Heart left ventricle (tissue), 16 donors: ENCODE measurements at regions of chr19 and their contacts with region 1.

Region 1: DNA sequence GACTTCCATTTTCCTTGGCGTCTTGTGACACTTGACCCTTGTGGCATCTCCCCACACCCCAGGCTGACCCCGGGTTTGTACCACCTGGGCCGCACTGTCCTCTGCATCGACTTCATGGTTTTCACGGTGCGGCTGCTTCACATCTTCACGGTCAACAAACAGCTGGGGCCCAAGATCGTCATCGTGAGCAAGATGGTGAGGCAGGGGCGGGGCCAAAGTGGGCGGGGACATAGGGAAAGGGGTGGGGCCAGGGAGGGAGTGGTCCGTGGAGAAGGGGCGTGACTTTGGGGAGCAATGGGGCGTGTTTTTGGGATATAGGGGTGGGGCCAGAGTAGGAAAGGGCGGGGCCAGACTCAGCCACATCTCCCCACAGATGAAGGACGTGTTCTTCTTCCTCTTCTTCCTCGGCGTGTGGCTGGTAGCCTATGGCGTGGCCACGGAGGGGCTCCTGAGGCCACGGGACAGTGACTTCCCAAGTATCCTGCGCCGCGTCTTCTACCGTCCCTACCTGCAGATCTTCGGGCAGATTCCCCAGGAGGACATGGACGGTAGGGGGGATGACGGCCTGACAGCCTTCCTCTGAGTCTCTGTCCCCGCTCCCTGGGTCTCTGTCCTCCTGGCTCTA is 42.8 kb downstream of the TRPM4 start:
- DNase-seq: no peak
- ATAC-seq: peak in 2 of 4 donors; percentile 26 to 44
- H3K4me3 ChIP-seq: no peak overlapping the region
- H3K27ac ChIP-seq: no peak overlapping the region
- H3K4me1 ChIP-seq: peaks cover 0 to 17% (median 6%) of the 10 kb centered on the region in 12 donors
- H3K27me3 ChIP-seq: no peaks in the 10 kb centered on the region
- CTCF ChIP-seq: no peak
- POLR2A ChIP-seq: no peak

Region 2: GRCh38 chr19:48881741-48882657 is 318.4 kb before region 1 on chr19:
- intact Hi-C with region 1: no loop called
- DNase-seq: no peak
- ATAC-seq: peak in 3 of 4 donors; percentile 30 to 62 (median 46)
- H3K4me3 ChIP-seq: no peak overlapping the region
- H3K27ac ChIP-seq: peak overlapping the region in 1 of 12 donors; percentile 62
- H3K4me1 ChIP-seq: peaks cover 0 to 34% (median 23%) of the 10 kb centered on the region in 12 donors
- H3K27me3 ChIP-seq: no peaks in the 10 kb centered on the region
- CTCF ChIP-seq: no peak
- POLR2A ChIP-seq: no peak

Region 3: GRCh38 chr19:48993175-48994034 is 206.9 kb before region 1 on chr19 and contains the starts of genes GYS1 and RUVBL2:
- intact Hi-C with region 1: loop called in 3 of 10 experiments (anchors 10 kb)
- DNase-seq: peak; percentile 99 to 100 (median 100)
- ATAC-seq: peak; percentile 91 to 94 (median 94)
- H3K4me3 ChIP-seq: peak within 1 kb of the TSS; percentile 56 to 99 (median 82)
- H3K27ac ChIP-seq: peak within 1 kb of the TSS; percentile 86 to 99 (median 96)
- H3K4me1 ChIP-seq: peaks cover 6 to 51% (median 35%) of the 10 kb centered on the region in 12 donors
- H3K27me3 ChIP-seq: no peaks in the 10 kb centered on the region
- CTCF ChIP-seq: peak; percentile 92 to 100 (median 98)
- POLR2A ChIP-seq: peak; percentile 77 to 98
- total RNA-seq, gene GYS1: 125 to 264 (median 173) TPM
- total RNA-seq, gene RUVBL2: 41.4 to 93.9 (median 50.9) TPM

Region 4: GRCh38 chr19:49097455-49098288 is 102.7 kb before region 1 on chr19:
- intact Hi-C with region 1: loop called in 9 of 10 experiments (anchors 2 to 5 kb)
- DNase-seq: peak; percentile 54 to 73 (median 62)
- ATAC-seq: peak; percentile 37 to 66 (median 57)
- H3K4me3 ChIP-seq: no peak overlapping the region
- H3K27ac ChIP-seq: no peak overlapping the region
- H3K4me1 ChIP-seq: peaks cover 0 to 32% (median 19%) of the 10 kb centered on the region in 12 donors
- H3K27me3 ChIP-seq: no peaks in the 10 kb centered on the region
- CTCF ChIP-seq: peak; percentile 97 to 100 (median 99)
- POLR2A ChIP-seq: no peak

Region 5: GRCh38 chr19:49157445-49158224 is 42.7 kb before region 1 on chr19 and contains the start of gene TRPM4:
- intact Hi-C with region 1: loop called in 4 of 10 experiments (anchors 5 kb)
- DNase-seq: peak; percentile 95 to 97 (median 96)
- ATAC-seq: peak; percentile 64 to 80 (median 79)
- H3K4me3 ChIP-seq: peak within 1 kb of the TSS; percentile 78 to 99 (median 90)
- H3K27ac ChIP-seq: peak within 1 kb of the TSS; percentile 89 to 100 (median 96)
- H3K4me1 ChIP-seq: peaks cover 0 to 40% (median 16%) of the 10 kb centered on the region in 12 donors
- H3K27me3 ChIP-seq: no peaks in the 10 kb centered on the region
- CTCF ChIP-seq: no peak
- POLR2A ChIP-seq: peak; percentile 6 to 92
- total RNA-seq, gene TRPM4: 19.3 to 34.5 (median 25.8) TPM

Region 6: GRCh38 chr19:49165111-49165750 is 35.1 kb before region 1 on chr19:
- intact Hi-C with region 1: loop called in 4 of 10 experiments (anchors 5 kb)
- DNase-seq: peak; percentile 52 to 81 (median 65)
- ATAC-seq: peak; percentile 87 to 94 (median 92)
- H3K4me3 ChIP-seq: peak overlapping the region in 9 of 12 donors; percentile 5 to 34 (median 22)
- H3K27ac ChIP-seq: peak overlapping the region; percentile 72 to 99 (median 90)
- H3K4me1 ChIP-seq: peaks cover 5 to 34% (median 20%) of the 10 kb centered on the region in 12 donors
- H3K27me3 ChIP-seq: no peaks in the 10 kb centered on the region
- CTCF ChIP-seq: no peak
- POLR2A ChIP-seq: peak in 1 of 2 donors; percentile 45